ENCODE measurements at regions of chr10 and their contacts with region 1.

Region 1: DNA sequence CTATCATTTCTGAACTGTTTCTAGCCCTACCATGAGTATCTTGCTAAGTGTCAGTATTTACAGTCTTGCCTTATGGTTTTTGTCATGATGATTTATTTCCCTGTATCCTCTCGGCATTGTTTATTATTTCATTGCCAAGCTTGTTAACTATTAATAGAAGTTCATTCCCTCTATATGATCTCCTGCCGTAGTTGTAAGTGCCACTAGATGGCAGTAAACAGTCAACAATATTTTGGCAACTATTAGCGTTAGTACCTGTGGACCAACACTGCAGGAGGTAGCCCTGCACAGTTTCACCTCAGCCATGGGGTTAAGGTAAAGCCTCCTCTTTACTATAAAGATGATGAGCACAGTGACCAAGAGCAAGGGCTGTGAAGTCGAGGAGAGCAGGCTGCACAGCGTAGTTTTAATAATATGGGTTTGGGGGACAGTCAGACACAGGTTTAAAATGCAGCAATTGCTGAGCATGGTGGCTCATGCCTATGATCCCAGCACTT is 26.1 kb upstream of the CCNJ start:
- DNase-seq: peak; percentile 23
- H3K4me3 ChIP-seq: no peak overlapping the region
- H3K27ac ChIP-seq: no peak overlapping the region
- H3K27me3 ChIP-seq: no peaks in the 10 kb centered on the region
- CTCF ChIP-seq: peak; percentile 78

Region 2: GRCh38 chr10:95998255-95998784 is 18.9 kb before region 1 on chr10:
- CTCF ChIA-PET with region 1: interaction called, 21 read pairs
- POLR2A ChIA-PET with region 1: no interaction called
- DNase-seq: no peak
- H3K4me3 ChIP-seq: no peak overlapping the region
- H3K27ac ChIP-seq: no peak overlapping the region
- H3K27me3 ChIP-seq: no peaks in the 10 kb centered on the region
- CTCF ChIP-seq: no peak

Region 3: DNA sequence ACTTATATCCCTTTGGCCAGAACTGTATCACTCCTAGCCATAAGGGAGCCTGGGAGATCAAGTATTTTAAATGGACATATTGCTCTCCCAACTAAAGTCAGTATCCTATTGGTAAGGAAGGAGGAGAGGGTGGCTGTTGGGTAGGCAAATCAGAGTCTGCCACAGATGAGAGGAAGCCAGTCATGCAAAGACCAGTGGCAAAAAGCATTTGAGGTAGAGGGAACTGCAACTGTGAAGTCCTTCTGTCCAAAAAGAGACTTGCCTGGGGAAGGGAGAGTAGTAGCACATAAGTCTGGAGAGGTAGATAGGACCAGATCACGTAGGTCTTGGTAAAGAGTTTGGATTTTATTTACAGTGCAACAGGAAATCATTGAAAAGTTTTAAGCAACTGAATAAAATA is 17.4 kb after region 1 on chr10:
- CTCF ChIA-PET with region 1: interaction called, 17 read pairs
- POLR2A ChIA-PET with region 1: no interaction called
- DNase-seq: no peak
- H3K4me3 ChIP-seq: no peak overlapping the region
- H3K27ac ChIP-seq: no peak overlapping the region
- H3K27me3 ChIP-seq: peaks cover 2% of the 10 kb centered on the region
- CTCF ChIP-seq: no peak

Region 4: GRCh38 chr10:96229568-96230030 is 212.4 kb after region 1 on chr10:
- CTCF ChIA-PET with region 1: interaction called, 15 read pairs
- POLR2A ChIA-PET with region 1: no interaction called
- DNase-seq: peak; percentile 20
- H3K4me3 ChIP-seq: no peak overlapping the region
- H3K27ac ChIP-seq: no peak overlapping the region
- H3K27me3 ChIP-seq: no peaks in the 10 kb centered on the region
- CTCF ChIP-seq: peak; percentile 78

Region 5: DNA sequence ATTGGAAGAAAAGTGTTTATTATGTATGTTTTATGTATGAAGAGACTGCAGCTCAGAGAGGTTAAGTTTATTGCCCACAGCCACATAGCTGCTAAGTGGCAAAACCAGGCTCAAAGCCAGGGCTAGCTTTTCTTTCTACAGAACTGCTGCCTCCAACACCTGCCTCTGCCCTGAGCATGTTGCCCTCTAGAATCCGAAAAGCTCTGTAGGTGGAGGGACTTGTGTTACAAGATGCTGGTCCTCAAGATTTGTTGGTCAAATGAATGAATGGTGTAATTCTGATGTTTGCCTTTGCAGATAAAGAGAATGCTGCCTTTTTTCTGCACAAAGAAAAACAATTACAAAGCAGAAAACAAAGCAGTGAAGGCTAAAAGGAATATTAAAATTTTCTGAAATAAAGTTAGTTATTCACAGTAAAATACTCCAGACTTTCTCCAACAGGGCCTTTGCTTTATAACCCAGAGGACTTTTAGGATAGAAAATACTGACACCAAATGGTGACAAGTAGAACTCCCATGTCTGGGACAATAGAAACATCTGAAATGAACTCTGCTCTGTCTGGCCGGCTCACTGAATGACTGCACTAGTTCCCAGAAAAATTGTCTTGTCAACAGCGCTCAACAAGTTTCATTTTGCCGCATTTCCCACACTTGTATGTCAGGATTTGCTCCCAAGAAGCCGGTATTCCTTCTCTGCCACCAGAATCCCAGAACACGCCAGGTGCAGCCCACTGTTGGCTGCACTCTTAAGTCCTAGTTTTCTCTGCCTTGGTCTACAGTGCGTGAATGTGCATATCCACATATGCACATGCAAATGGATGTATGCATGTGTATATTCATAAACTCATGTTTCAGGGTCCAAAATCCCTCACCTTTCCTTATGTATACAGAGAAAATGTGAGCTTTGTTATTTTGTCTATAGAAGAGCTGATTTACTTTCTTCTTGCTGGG is 276.0 kb after region 1 on chr10:
- CTCF ChIA-PET with region 1: interaction called, 93 read pairs
- POLR2A ChIA-PET with region 1: no interaction called
- DNase-seq: peak; percentile 1
- H3K4me3 ChIP-seq: no peak overlapping the region
- H3K27ac ChIP-seq: no peak overlapping the region
- H3K27me3 ChIP-seq: peaks cover 3% of the 10 kb centered on the region
- CTCF ChIP-seq: peak; percentile 54

Region 6: DNA sequence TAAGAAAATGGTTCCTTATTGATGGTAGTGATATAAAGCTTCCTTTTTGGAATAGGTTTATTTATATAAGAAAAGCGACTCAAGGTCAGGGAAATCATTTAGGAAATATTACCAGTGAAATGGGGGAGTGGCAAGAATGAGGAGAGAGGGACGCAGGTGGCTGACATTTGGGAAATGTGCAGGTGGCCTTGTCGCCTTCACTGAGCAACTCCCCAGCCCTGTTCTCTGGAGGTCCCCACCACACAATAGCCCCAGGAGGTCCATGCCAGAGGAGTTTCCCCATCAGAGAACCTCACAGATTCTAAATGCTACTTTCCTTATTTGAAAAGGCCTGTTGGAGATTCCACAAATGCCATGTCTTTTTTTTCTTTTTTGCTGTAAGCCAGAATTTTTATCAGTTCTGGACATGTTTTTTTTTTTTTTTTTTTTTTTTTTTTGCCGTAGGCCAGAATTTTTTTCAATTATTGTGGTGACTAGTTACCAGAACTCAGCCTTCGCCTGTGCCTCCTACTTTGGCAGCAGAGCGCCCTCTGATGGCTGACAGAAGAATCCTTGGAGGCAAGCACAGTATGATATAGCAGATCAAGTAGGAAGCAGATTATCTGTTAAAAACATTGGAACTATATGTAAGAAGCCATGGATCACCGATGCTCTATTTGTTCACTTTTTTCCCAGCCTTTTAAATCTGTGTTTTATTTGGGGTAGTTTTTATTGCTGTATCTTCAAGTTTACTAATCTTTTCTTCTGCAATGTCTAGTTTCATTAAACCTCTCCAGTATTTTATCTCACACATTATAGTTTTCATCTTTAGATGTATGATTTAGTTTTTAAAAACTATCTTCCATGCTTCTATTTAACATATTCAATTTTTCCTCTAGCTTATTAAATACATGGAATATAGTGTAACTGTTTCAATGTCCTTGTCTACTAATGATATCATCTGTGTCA is 323.0 kb after region 1 on chr10:
- CTCF ChIA-PET with region 1: interaction called, 90 read pairs
- POLR2A ChIA-PET with region 1: no interaction called
- DNase-seq: peak; percentile 29
- H3K4me3 ChIP-seq: no peak overlapping the region
- H3K27ac ChIP-seq: no peak overlapping the region
- H3K27me3 ChIP-seq: no peaks in the 10 kb centered on the region
- CTCF ChIP-seq: peak; percentile 72